ENCODE measurements at regions of chr15 and their contacts with region 1.

Region 1: DNA sequence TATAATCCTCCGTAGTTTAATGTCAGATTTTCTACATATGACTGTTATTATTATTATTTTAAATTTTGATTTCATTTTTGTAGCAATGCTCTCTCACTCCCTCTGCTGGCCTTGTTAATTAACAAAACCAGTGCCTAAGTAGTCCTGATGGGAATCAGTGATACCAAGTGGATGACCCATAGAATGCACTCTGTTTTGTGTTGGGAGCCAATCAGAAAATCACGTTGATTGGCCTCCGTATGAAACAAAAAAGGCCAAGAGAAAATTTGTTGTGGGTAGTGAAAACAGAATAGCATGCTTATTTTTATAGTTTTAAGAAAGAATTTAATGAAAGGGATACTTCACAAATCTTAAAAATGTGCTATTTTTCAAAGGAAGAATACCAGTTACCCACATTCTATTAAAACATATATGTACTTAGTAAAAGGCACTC is 34.4 kb upstream of the MEIS2 start:
- DNase-seq: no peak
- H3K4me3 ChIP-seq: no peak overlapping the region
- H3K27ac ChIP-seq: no peak overlapping the region
- H3K4me1 ChIP-seq: no peaks in the 10 kb centered on the region
- H3K27me3 ChIP-seq: no peaks in the 10 kb centered on the region
- CTCF ChIP-seq: peak; percentile 71

Region 2: DNA sequence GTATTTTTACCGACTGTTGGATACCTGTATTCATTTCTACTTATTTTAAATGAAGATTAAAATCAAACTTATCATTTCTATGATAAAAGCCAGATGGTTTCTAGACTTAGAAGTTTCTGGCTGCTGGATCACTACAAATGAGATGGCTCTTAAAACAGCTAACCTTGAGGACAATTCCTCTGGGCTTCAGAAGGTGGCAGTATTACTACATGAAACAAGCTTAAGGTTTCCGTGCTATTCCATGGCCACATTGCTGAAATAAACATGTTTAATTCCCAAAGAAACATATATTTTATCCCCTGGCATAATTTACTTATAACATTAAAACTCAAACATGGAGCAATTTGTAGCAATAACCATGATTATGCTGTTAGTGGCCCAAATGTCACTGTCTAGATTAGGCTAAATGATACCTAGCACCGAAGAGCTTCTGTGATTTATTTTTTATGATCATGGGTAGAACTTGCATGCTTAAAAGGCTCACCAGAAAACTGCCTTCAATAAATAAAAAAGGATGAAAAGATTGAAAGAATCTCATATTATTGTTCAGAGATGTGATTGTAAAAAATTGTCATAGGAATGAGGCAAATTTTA is 1845.6 kb before region 1 on chr15:
- CTCF ChIA-PET with region 1: no interaction called
- POLR2A ChIA-PET with region 1: no interaction called
- intact Hi-C with region 1: loop called (anchors 5 kb)
- DNase-seq: peak in 1 of 2 experiments; percentile 43
- H3K4me3 ChIP-seq: no peak overlapping the region
- H3K27ac ChIP-seq: no peak overlapping the region
- H3K4me1 ChIP-seq: peaks cover 17% of the 10 kb centered on the region; the same call in 1 of the 2 replicates
- H3K27me3 ChIP-seq: no peaks in the 10 kb centered on the region
- CTCF ChIP-seq: peak; percentile 75

Region 3: GRCh38 chr15:35519541-35520149 is 1615.1 kb before region 1 on chr15:
- CTCF ChIA-PET with region 1: no interaction called
- POLR2A ChIA-PET with region 1: no interaction called
- intact Hi-C with region 1: loop called (anchors 5 kb)
- DNase-seq: no peak
- H3K4me3 ChIP-seq: no peak overlapping the region
- H3K27ac ChIP-seq: no peak overlapping the region
- H3K4me1 ChIP-seq: no peaks in the 10 kb centered on the region
- H3K27me3 ChIP-seq: no peaks in the 10 kb centered on the region
- CTCF ChIP-seq: peak; percentile 70

Region 4: DNA sequence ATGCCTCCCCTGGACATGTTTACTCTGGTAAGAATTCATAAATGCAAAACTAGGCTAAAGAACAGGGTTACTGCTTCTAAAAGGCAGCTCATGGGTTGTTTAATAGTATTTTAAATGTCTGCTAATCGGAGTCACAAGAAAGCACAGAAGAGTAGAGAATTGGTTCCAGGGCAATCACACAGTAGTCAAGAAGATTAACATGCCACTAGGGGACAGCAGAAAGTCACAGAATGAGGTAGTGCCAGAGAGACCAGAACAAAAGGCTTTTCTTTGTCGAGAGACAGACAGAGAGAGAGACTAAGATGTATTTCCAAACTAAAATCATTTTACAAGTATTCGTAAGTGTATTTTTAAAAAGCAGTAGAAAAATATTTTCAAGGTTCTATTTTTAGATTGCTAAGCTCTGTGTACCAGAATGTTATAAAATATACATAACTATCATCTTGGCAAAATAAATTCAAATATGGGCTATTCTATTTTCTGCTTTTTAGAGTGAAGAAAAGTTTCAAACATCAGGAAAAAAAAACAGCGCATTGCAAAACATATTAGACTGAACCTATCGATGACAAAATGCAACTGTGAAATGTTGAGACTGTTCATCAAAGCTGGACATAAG is 633.5 kb before region 1 on chr15:
- CTCF ChIA-PET with region 1: no interaction called
- POLR2A ChIA-PET with region 1: no interaction called
- intact Hi-C with region 1: loop called (anchors 1 kb)
- DNase-seq: peak in 1 of 2 experiments; percentile 27
- H3K4me3 ChIP-seq: no peak overlapping the region
- H3K27ac ChIP-seq: no peak overlapping the region
- H3K4me1 ChIP-seq: no peaks in the 10 kb centered on the region
- H3K27me3 ChIP-seq: no peaks in the 10 kb centered on the region
- CTCF ChIP-seq: peak; percentile 59

Region 5: GRCh38 chr15:36858423-36858822 is 276.3 kb before region 1 on chr15:
- CTCF ChIA-PET with region 1: interaction called, 20 read pairs
- POLR2A ChIA-PET with region 1: no interaction called
- intact Hi-C with region 1: no loop called
- DNase-seq: no peak
- H3K4me3 ChIP-seq: no peak overlapping the region
- H3K27ac ChIP-seq: no peak overlapping the region
- H3K4me1 ChIP-seq: no peaks in the 10 kb centered on the region
- H3K27me3 ChIP-seq: no peaks in the 10 kb centered on the region
- CTCF ChIP-seq: no peak

Region 6: GRCh38 chr15:36883713-36884517 is 250.8 kb before region 1 on chr15:
- CTCF ChIA-PET with region 1: interaction called, 5 read pairs
- POLR2A ChIA-PET with region 1: no interaction called
- intact Hi-C with region 1: loop called (anchors 1 kb)
- DNase-seq: peak in 1 of 2 experiments; percentile 72
- H3K4me3 ChIP-seq: no peak overlapping the region
- H3K27ac ChIP-seq: no peak overlapping the region
- H3K4me1 ChIP-seq: no peaks in the 10 kb centered on the region
- H3K27me3 ChIP-seq: no peaks in the 10 kb centered on the region
- CTCF ChIP-seq: peak; percentile 86

Region 7: DNA sequence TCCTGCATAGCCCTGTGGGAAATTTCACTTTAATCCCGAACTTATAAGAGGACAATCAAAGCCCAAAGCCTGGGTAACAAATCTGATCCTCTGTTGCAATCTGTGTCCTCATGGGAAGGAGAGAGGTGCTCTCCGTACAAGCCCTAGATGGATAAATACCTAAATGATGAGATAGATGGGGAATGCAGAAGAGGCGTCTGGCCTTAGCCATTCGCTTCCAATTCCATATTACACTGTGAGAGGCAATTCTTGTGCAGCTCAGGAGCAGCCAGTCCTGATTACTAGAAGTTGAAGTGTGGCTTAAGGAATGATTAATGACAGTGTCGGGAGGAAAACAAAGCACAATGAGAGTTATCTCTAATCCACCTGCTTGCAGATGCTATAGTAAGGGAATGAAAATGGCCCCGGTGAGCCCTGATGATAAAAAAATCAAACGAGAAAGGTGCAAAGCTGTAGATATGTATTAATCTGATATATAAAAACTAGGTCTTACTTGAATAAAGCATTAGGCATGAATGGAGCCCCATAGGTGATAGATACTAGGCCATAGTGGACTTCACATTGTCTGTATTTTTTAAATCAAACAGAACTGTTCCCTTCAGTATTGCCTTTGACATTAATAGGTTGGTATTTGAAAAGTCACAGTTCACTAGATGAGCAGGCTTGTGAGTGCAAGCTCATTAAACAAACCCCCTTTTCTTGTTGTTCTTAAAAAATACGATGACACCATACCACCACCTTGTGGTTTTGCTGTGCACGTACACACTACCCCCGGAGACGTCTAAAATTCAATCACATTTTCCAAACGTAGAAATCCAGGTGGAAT is 745.5 kb after region 1 on chr15:
- CTCF ChIA-PET with region 1: no interaction called
- POLR2A ChIA-PET with region 1: no interaction called
- intact Hi-C with region 1: loop called (anchors 10 kb)
- DNase-seq: peak in 1 of 2 experiments; percentile 22
- H3K4me3 ChIP-seq: no peak overlapping the region
- H3K27ac ChIP-seq: no peak overlapping the region
- H3K4me1 ChIP-seq: peaks cover 5% of the 10 kb centered on the region; the same call in 1 of the 2 replicates
- H3K27me3 ChIP-seq: no peaks in the 10 kb centered on the region
- CTCF ChIP-seq: peak; percentile 81

Measured in PC-9 (cell line).